ENCODE measurements at regions of chr4 and their contacts with region 1.

Region 1: GRCh38 chr4:80266253-80266901 is at the start of gene FGF5:
- DNase-seq: peak in 1 of 2 experiments; percentile 77
- H3K4me3 ChIP-seq: peak within 1 kb of the TSS; percentile 29 to 56 (median 40)
- H3K27ac ChIP-seq: no peak within 1 kb of the TSS
- H3K4me1 ChIP-seq: peaks cover 0 to 28% (median 19%) of the 10 kb centered on the region in 4 experiments; a peak in 6 of 7 replicates
- H3K27me3 ChIP-seq: peaks cover 82 to 92% (median 88%) of the 10 kb centered on the region in 4 experiments
- CTCF ChIP-seq: no peak
- EP300 ChIP-seq: no peak
- POLR2A ChIP-seq: no peak
- RAD21 ChIP-seq: no peak
- total RNA-seq, gene FGF5: not detected in 2 replicates

Region 2: GRCh38 chr4:80184053-80184790 is 82.2 kb before region 1 on chr4:
- CTCF ChIA-PET with region 1: interaction called, 22 read pairs
- POLR2A ChIA-PET with region 1: interaction called, 3 read pairs
- DNase-seq: peak in 1 of 2 experiments; percentile 99
- H3K4me3 ChIP-seq: peak overlapping the region; percentile 42 to 86 (median 56)
- H3K27ac ChIP-seq: no peak overlapping the region
- H3K4me1 ChIP-seq: peaks cover 0 to 19% (median 14%) of the 10 kb centered on the region in 4 experiments; a peak in 6 of 7 replicates
- H3K27me3 ChIP-seq: peaks cover 64 to 83% (median 74%) of the 10 kb centered on the region in 4 experiments
- CTCF ChIP-seq: peak; percentile 74 to 98 (median 89)
- EP300 ChIP-seq: no peak
- POLR2A ChIP-seq: no peak
- RAD21 ChIP-seq: peak; percentile 71 to 80

Region 3: GRCh38 chr4:80189956-80190677 is 76.3 kb before region 1 on chr4:
- CTCF ChIA-PET with region 1: interaction called, 22 read pairs
- POLR2A ChIA-PET with region 1: interaction called, 3 read pairs
- DNase-seq: peak in 1 of 2 experiments; percentile 82
- H3K4me3 ChIP-seq: peak overlapping the region in 3 of 4 experiments; percentile 19 to 36 (median 32); a peak in 6 of 8 replicates
- H3K27ac ChIP-seq: no peak overlapping the region
- H3K4me1 ChIP-seq: peaks cover 0 to 22% (median 12%) of the 10 kb centered on the region in 4 experiments; a peak in 5 of 7 replicates
- H3K27me3 ChIP-seq: peaks cover 97 to 100% (median 99%) of the 10 kb centered on the region in 4 experiments
- CTCF ChIP-seq: no peak
- EP300 ChIP-seq: no peak
- POLR2A ChIP-seq: no peak
- RAD21 ChIP-seq: no peak

Region 4: GRCh38 chr4:80196922-80197573 is 69.3 kb before region 1 on chr4 and contains the start of gene PRDM8:
- CTCF ChIA-PET with region 1: interaction called, 12 read pairs
- POLR2A ChIA-PET with region 1: interaction called, 4 read pairs
- DNase-seq: peak in 1 of 2 experiments; percentile 62
- H3K4me3 ChIP-seq: peak within 1 kb of the TSS in 3 of 4 experiments; percentile 7 to 47 (median 7); a peak in 5 of 8 replicates
- H3K27ac ChIP-seq: no peak within 1 kb of the TSS
- H3K4me1 ChIP-seq: peaks cover 4 to 13% (median 8%) of the 10 kb centered on the region in 4 experiments
- H3K27me3 ChIP-seq: peaks cover 91 to 100% (median 96%) of the 10 kb centered on the region in 4 experiments
- CTCF ChIP-seq: no peak
- EP300 ChIP-seq: no peak
- POLR2A ChIP-seq: no peak
- RAD21 ChIP-seq: no peak
- total RNA-seq, gene PRDM8: 0.10 TPM in 1 of 2 replicates, not detected in the other

Region 5: GRCh38 chr4:80202190-80202711 is 64.1 kb before region 1 on chr4:
- CTCF ChIA-PET with region 1: interaction called, 15 read pairs
- POLR2A ChIA-PET with region 1: interaction called, 4 read pairs
- DNase-seq: peak in 1 of 2 experiments; percentile 94
- H3K4me3 ChIP-seq: peak overlapping the region; percentile 4 to 55 (median 18); a peak in 5 of 8 replicates
- H3K27ac ChIP-seq: no peak overlapping the region
- H3K4me1 ChIP-seq: peaks cover 4 to 15% (median 7%) of the 10 kb centered on the region in 4 experiments
- H3K27me3 ChIP-seq: peaks cover 86 to 100% (median 93%) of the 10 kb centered on the region in 4 experiments
- CTCF ChIP-seq: peak in 2 of 3 experiments; percentile 69; a peak in 3 of 4 replicates
- EP300 ChIP-seq: peak in 1 of 2 experiments; percentile 61; a peak in 1 of 3 replicates
- POLR2A ChIP-seq: no peak
- RAD21 ChIP-seq: peak; percentile 31 to 43; a peak in 2 of 4 replicates

Region 6: GRCh38 chr4:80229590-80229989 is 36.8 kb before region 1 on chr4:
- CTCF ChIA-PET with region 1: no interaction called
- POLR2A ChIA-PET with region 1: no interaction called
- DNase-seq: no peak
- H3K4me3 ChIP-seq: no peak overlapping the region
- H3K27ac ChIP-seq: no peak overlapping the region
- H3K4me1 ChIP-seq: no peaks in the 10 kb centered on the region
- H3K27me3 ChIP-seq: no peaks in the 10 kb centered on the region
- CTCF ChIP-seq: no peak
- EP300 ChIP-seq: no peak
- POLR2A ChIP-seq: no peak
- RAD21 ChIP-seq: no peak

Region 7: GRCh38 chr4:80295336-80295735 is 29.0 kb after region 1 on chr4:
- CTCF ChIA-PET with region 1: no interaction called
- POLR2A ChIA-PET with region 1: no interaction called
- DNase-seq: no peak
- H3K4me3 ChIP-seq: no peak overlapping the region
- H3K27ac ChIP-seq: no peak overlapping the region
- H3K4me1 ChIP-seq: no peaks in the 10 kb centered on the region
- H3K27me3 ChIP-seq: no peaks in the 10 kb centered on the region
- CTCF ChIP-seq: no peak
- EP300 ChIP-seq: no peak
- POLR2A ChIP-seq: no peak
- RAD21 ChIP-seq: no peak

Region 8: GRCh38 chr4:80335554-80336358 is 69.4 kb after region 1 on chr4 and contains the start of gene CFAP299:
- CTCF ChIA-PET with region 1: interaction called, 37 read pairs
- POLR2A ChIA-PET with region 1: no interaction called
- DNase-seq: peak; percentile 68 to 94
- H3K4me3 ChIP-seq: peak within 1 kb of the TSS; percentile 50 to 85 (median 82)
- H3K27ac ChIP-seq: no peak within 1 kb of the TSS
- H3K4me1 ChIP-seq: no peaks in the 10 kb centered on the region; a peak in 1 of 7 replicates
- H3K27me3 ChIP-seq: peaks cover 0 to 11% (median 9%) of the 10 kb centered on the region in 4 experiments; a peak in 6 of 7 replicates
- CTCF ChIP-seq: peak; percentile 44 to 57 (median 48)
- EP300 ChIP-seq: no peak
- POLR2A ChIP-seq: no peak
- RAD21 ChIP-seq: peak; percentile 31 to 49; a peak in 3 of 4 replicates
- total RNA-seq, gene CFAP299: not detected in 2 replicates